Sciatic nerve (tissue), 2 donors: ENCODE measurements at regions of chr10 and their contacts with region 1.

Region 1: GRCh38 chr10:25666276-25666675 is 267.8 kb upstream of the MYO3A start:
- DNase-seq: no peak
- ATAC-seq: no peak

Region 2: DNA sequence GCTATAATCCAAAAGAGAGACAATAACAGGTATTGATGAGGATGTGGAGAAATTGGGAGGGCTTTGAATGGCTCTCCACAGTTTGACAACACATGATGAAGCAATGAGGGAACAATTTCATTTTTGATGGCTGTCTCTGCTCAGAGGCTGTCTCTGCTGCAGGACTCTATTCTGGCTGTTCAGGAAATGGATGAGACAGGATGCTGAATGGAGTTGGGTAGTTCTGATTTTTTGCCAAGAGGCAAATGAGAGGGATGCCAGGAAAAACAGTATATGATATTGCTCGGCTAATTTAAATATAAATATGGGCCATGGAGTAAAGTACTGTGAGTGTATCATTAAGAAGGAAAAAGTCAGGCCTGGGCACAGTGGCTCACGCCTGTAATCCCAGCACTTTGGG is 788.6 kb after region 1 on chr10:
- intact Hi-C with region 1: loop called (anchors 5 kb)
- DNase-seq: no peak
- ATAC-seq: no peak